Endothelial cell of umbilical vein (primary cell): ENCODE measurements at regions of chr12 and their contacts with region 1.

Region 1: GRCh38 chr12:10749700-10750384 is 26.7 kb upstream of the YBX3 start:
- DNase-seq: peak; percentile 98
- H3K4me3 ChIP-seq: peak overlapping the region in 1 of 3 experiments; percentile 24
- H3K27ac ChIP-seq: peak overlapping the region; percentile 36
- H3K4me1 ChIP-seq: peaks cover 4% of the 10 kb centered on the region
- H3K27me3 ChIP-seq: peaks cover 9 to 13% of the 10 kb centered on the region in 2 experiments
- CTCF ChIP-seq: peak; percentile 80 to 93
- POLR2A ChIP-seq: no peak

Region 2: GRCh38 chr12:10153271-10154144 is 596.3 kb before region 1 on chr12:
- CTCF ChIA-PET with region 1: interaction called, 8 read pairs
- POLR2A ChIA-PET with region 1: no interaction called
- dilution Hi-C with region 1: no loop called
- intact Hi-C with region 1: loop called (anchors 1 kb)
- DNase-seq: peak; percentile 81
- H3K4me3 ChIP-seq: peak overlapping the region; percentile 44 to 67 (median 48)
- H3K27ac ChIP-seq: peak overlapping the region; percentile 58
- H3K4me1 ChIP-seq: peaks cover 5% of the 10 kb centered on the region
- H3K27me3 ChIP-seq: peaks cover 0 to 2% of the 10 kb centered on the region in 2 experiments
- CTCF ChIP-seq: peak; percentile 70 to 72
- POLR2A ChIP-seq: no peak

Region 3: DNA sequence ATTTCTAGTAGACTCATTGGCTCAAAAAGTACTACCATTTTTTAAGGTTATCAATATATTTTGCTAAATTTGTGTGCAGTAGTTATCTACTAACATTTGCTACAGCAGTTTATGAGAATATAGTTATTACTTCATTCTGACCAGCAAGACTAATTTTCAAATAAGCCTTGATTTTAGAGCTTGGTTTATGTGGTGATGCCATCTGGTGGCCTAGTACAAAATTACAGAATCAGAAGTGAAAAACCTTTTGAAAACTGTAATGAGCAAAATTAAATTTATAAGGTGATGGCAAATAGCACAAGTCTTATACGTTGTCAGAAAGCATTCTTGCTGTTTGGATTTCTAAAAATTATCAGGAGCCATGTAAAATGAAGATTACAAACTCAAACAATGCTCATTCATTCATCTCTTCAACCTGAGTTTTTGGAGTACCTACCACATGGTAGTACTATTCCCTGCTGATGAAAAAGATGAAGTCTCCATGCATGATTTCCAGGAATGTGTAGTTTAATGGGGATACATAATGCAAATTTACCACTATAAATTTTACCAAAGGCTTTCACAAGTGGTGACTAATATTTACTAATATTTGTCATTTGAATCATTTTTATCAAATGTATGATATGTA is 187.4 kb before region 1 on chr12:
- CTCF ChIA-PET with region 1: interaction called, 8 read pairs
- POLR2A ChIA-PET with region 1: no interaction called
- dilution Hi-C with region 1: no loop called
- intact Hi-C with region 1: loop called (anchors 2 kb)
- DNase-seq: peak; percentile 72
- H3K4me3 ChIP-seq: no peak overlapping the region
- H3K27ac ChIP-seq: no peak overlapping the region
- H3K4me1 ChIP-seq: no peaks in the 10 kb centered on the region
- H3K27me3 ChIP-seq: no peaks in the 10 kb centered on the region
- CTCF ChIP-seq: peak; percentile 34 to 41
- POLR2A ChIP-seq: no peak

Region 4: GRCh38 chr12:10641735-10642500 is 107.9 kb before region 1 on chr12:
- CTCF ChIA-PET with region 1: no interaction called
- POLR2A ChIA-PET with region 1: no interaction called
- dilution Hi-C with region 1: no loop called
- intact Hi-C with region 1: no loop called
- DNase-seq: peak; percentile 99
- H3K4me3 ChIP-seq: peak overlapping the region in 1 of 3 experiments; percentile 43
- H3K27ac ChIP-seq: peak overlapping the region; percentile 98
- H3K4me1 ChIP-seq: peaks cover 48% of the 10 kb centered on the region
- H3K27me3 ChIP-seq: no peaks in the 10 kb centered on the region
- CTCF ChIP-seq: no peak
- POLR2A ChIP-seq: peak; percentile 95

Region 5: DNA sequence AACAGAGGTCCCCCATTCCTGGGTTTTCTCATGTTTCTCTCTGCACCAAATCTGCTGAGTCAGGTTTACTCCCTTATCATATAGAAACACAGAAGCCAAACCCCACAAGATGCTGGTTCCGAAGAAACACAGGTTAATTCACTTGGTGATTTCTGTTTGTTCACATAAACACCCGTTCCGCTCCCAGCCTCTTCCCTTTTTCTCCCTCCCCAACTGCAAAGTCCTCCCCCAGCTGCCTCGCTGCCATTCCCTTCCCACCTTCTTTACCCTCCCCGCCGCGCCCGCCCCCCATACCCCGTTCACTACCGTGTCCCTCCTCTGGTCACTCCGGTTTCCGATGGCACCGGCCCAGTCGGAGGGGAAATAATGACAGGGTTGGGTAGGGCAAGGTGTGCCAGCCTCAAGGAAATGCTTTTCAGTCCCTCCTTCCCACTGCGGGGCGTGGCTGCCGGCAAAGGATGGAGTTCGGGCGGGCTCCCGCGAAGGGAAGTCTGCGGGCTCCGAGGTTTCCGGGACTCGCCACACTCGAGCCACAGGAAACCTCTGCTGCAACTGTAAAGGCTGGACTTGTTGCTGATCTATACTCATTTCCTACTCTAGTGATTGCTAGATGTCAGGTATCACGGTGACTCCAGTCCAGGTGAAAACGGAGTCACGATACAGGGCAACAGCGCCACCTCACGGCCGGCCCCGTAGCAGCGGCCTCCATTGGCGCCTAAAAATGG is 76.0 kb before region 1 on chr12 and contains the start of gene STYK1:
- CTCF ChIA-PET with region 1: interaction called, 4 read pairs
- POLR2A ChIA-PET with region 1: no interaction called
- dilution Hi-C with region 1: no loop called
- intact Hi-C with region 1: loop called (anchors 1 kb)
- DNase-seq: peak; percentile 75
- H3K4me3 ChIP-seq: peak within 1 kb of the TSS; percentile 49 to 82 (median 69)
- H3K27ac ChIP-seq: peak within 1 kb of the TSS; percentile 49
- H3K4me1 ChIP-seq: peaks cover 22% of the 10 kb centered on the region
- H3K27me3 ChIP-seq: no peaks in the 10 kb centered on the region
- CTCF ChIP-seq: peak; percentile 92 to 95
- POLR2A ChIP-seq: no peak
- total RNA-seq, gene STYK1: 14.6 and 15.2 TPM in 2 replicates

Region 6: GRCh38 chr12:10721651-10722501 is 28.0 kb before region 1 on chr12:
- CTCF ChIA-PET with region 1: interaction called, 49 read pairs
- POLR2A ChIA-PET with region 1: no interaction called
- dilution Hi-C with region 1: no loop called
- intact Hi-C with region 1: loop called (anchors 1 kb)
- DNase-seq: peak; percentile 100
- H3K4me3 ChIP-seq: peak overlapping the region; percentile 87 to 92 (median 88)
- H3K27ac ChIP-seq: peak overlapping the region; percentile 98
- H3K4me1 ChIP-seq: peaks cover 57% of the 10 kb centered on the region
- H3K27me3 ChIP-seq: no peaks in the 10 kb centered on the region
- CTCF ChIP-seq: no peak
- POLR2A ChIP-seq: peak; percentile 39

Region 7: GRCh38 chr12:10779103-10779502 is 29.3 kb after region 1 on chr12:
- CTCF ChIA-PET with region 1: interaction called, 10 read pairs
- POLR2A ChIA-PET with region 1: no interaction called
- dilution Hi-C with region 1: no loop called
- intact Hi-C with region 1: no loop called
- DNase-seq: no peak
- H3K4me3 ChIP-seq: no peak overlapping the region
- H3K27ac ChIP-seq: no peak overlapping the region
- H3K4me1 ChIP-seq: no peaks in the 10 kb centered on the region
- H3K27me3 ChIP-seq: peaks cover 7% of the 10 kb centered on the region in 2 experiments
- CTCF ChIP-seq: no peak
- POLR2A ChIP-seq: no peak